Posterior vena cava (tissue), 2 donors: ENCODE measurements at regions of chr21 and their contacts with region 1.

Region 1: DNA sequence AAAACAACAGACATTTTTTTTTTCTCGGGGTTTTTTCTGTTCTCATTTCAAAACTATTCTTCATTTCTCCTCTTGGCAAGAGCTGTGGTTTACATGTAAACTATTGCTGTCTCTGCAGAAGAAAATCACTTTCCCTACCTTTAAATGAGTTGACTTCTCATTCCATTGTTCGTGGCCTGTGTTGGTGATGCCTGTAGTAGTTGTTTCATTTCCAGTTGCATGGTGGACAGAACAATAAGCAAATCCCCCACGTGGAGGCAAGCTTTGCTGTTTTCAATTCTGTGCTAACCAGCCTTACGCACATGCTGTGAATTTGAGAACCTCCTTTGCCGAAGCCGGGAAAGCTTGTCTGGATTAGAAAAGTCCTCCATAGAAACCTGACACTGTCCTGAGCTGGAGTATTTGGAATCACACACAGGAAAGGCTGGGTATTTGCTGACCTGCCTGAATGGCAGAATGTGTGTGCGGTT is 26.2 kb upstream of the MAP3K7CL start:
- DNase-seq: no peak

Region 2: GRCh38 chr21:29077651-29078090 is 26.6 kb before region 1 on chr21:
- intact Hi-C with region 1: loop called in 1 of 2 experiments (anchors 2 kb)
- DNase-seq: no peak